GM12878 (cell line): ENCODE measurements at regions of chr19 and their contacts with region 1.

Region 1: DNA sequence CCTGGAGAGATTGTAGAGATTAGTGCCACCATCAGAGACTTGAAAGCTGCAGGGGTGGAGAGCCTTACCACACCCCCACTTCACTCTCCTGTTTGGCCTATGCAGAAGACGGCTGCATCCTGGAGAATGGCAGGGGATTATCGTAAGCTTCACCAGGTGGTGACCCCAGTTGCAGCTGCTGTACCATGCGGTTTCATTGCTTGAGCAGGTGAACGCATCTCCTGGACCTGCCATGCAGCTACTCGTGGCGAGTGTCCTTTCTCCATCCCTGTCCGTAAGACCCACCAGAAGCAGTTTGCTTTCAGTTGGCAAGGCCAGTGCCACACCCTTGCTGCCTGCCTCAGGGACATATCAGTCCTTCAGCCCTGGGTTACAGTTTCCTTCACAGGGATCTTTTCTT is 21.2 kb downstream of the PPP5C start:
- DNase-seq: no peak
- ATAC-seq: no peak
- H3K4me3 ChIP-seq: no peak overlapping the region
- H3K27ac ChIP-seq: no peak overlapping the region
- H3K4me1 ChIP-seq: peaks cover 7% of the 10 kb centered on the region
- H3K27me3 ChIP-seq: no peaks in the 10 kb centered on the region
- CTCF ChIP-seq: no peak
- EP300 ChIP-seq: no peak
- POLR2A ChIP-seq: no peak
- RAD21 ChIP-seq: no peak

Region 2: DNA sequence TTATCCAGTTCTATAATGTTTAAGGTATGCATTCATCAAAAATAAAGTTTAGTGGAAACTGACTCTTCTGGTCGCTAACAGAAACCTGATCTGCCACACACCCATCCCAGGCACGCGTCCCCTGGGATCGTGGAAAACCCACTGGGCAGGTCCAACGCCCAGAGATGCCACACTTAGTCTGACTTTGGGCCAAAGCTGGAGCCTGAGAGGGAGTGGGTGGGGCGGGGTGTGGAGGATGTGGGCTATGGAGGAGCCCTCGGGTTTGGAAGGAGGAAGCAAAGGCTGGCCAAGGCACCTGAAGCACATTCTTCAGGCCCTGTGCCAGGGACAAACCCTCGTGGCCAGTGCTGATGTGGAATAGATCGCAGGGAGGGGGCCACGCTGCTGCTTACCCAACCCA is 136.1 kb before region 1 on chr19:
- CTCF ChIA-PET with region 1: no interaction called
- POLR2A ChIA-PET with region 1: no interaction called
- RAD21 ChIA-PET with region 1: no interaction called
- SMC1A ChIA-PET with region 1: no interaction called
- in situ Hi-C with region 1: no loop called
- intact Hi-C with region 1: no loop called
- DNase-seq: no peak
- ATAC-seq: no peak
- H3K4me3 ChIP-seq: no peak overlapping the region
- H3K27ac ChIP-seq: no peak overlapping the region
- H3K4me1 ChIP-seq: no peaks in the 10 kb centered on the region
- H3K27me3 ChIP-seq: peaks cover 0 to 3% of the 10 kb centered on the region in 2 experiments; a peak in 2 of 4 replicates
- CTCF ChIP-seq: no peak
- EP300 ChIP-seq: no peak
- POLR2A ChIP-seq: no peak
- RAD21 ChIP-seq: no peak

Region 3: DNA sequence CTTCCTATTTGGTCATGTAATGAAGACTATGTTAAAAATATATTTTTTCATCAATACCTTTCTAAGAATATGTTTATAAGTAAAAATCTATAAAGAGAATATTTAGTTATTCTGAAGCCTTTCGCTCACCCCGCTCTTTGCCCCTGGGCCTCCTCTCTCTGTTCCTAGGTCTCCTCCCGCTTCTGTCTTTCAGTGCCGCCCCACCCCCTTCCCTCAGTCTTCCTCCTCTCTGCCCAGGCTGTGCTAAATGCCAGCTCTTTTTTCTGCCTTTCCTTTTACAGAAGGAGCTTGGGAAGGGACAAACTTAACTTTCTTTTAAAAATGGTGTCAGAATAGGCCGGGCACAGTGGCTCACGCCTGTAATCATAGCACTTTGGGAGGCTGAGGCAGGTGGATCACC is 48.5 kb before region 1 on chr19:
- CTCF ChIA-PET with region 1: no interaction called
- POLR2A ChIA-PET with region 1: no interaction called
- RAD21 ChIA-PET with region 1: no interaction called
- SMC1A ChIA-PET with region 1: no interaction called
- in situ Hi-C with region 1: no loop called
- intact Hi-C with region 1: no loop called
- DNase-seq: no peak
- ATAC-seq: no peak
- H3K4me3 ChIP-seq: no peak overlapping the region
- H3K27ac ChIP-seq: no peak overlapping the region
- H3K4me1 ChIP-seq: no peaks in the 10 kb centered on the region
- H3K27me3 ChIP-seq: no peaks in the 10 kb centered on the region; a peak in 1 of 4 replicates
- CTCF ChIP-seq: no peak
- EP300 ChIP-seq: no peak
- POLR2A ChIP-seq: no peak
- RAD21 ChIP-seq: no peak

Region 4: GRCh38 chr19:46346821-46347571 is 21.1 kb before region 1 on chr19 and contains the start of gene PPP5C:
- CTCF ChIA-PET with region 1: interaction called, 11 read pairs
- POLR2A ChIA-PET with region 1: no interaction called
- RAD21 ChIA-PET with region 1: no interaction called
- SMC1A ChIA-PET with region 1: interaction called, 3 read pairs
- in situ Hi-C with region 1: no loop called
- intact Hi-C with region 1: no loop called
- DNase-seq: peak; percentile 66
- ATAC-seq: peak; percentile 73
- H3K4me3 ChIP-seq: peak within 1 kb of the TSS; percentile 76
- H3K27ac ChIP-seq: peak within 1 kb of the TSS; percentile 91
- H3K4me1 ChIP-seq: peaks cover 39% of the 10 kb centered on the region
- H3K27me3 ChIP-seq: no peaks in the 10 kb centered on the region
- CTCF ChIP-seq: peak; percentile 90 to 99 (median 98); a peak in 5 of 6 replicates
- EP300 ChIP-seq: no peak
- POLR2A ChIP-seq: peak; percentile 84
- RAD21 ChIP-seq: peak; percentile 61
- polyA plus RNA-seq, gene PPP5C: 1.1 to 2.0 TPM

Region 5: GRCh38 chr19:46442808-46443450 is 74.8 kb after region 1 on chr19:
- CTCF ChIA-PET with region 1: no interaction called
- POLR2A ChIA-PET with region 1: no interaction called
- RAD21 ChIA-PET with region 1: no interaction called
- SMC1A ChIA-PET with region 1: no interaction called
- in situ Hi-C with region 1: no loop called
- intact Hi-C with region 1: no loop called
- DNase-seq: no peak
- ATAC-seq: no peak
- H3K4me3 ChIP-seq: no peak overlapping the region
- H3K27ac ChIP-seq: no peak overlapping the region
- H3K4me1 ChIP-seq: no peaks in the 10 kb centered on the region
- H3K27me3 ChIP-seq: no peaks in the 10 kb centered on the region
- CTCF ChIP-seq: no peak
- EP300 ChIP-seq: no peak
- POLR2A ChIP-seq: no peak
- RAD21 ChIP-seq: no peak